ENCODE measurements at regions of chr3 and their contacts with region 1.

Region 1: DNA sequence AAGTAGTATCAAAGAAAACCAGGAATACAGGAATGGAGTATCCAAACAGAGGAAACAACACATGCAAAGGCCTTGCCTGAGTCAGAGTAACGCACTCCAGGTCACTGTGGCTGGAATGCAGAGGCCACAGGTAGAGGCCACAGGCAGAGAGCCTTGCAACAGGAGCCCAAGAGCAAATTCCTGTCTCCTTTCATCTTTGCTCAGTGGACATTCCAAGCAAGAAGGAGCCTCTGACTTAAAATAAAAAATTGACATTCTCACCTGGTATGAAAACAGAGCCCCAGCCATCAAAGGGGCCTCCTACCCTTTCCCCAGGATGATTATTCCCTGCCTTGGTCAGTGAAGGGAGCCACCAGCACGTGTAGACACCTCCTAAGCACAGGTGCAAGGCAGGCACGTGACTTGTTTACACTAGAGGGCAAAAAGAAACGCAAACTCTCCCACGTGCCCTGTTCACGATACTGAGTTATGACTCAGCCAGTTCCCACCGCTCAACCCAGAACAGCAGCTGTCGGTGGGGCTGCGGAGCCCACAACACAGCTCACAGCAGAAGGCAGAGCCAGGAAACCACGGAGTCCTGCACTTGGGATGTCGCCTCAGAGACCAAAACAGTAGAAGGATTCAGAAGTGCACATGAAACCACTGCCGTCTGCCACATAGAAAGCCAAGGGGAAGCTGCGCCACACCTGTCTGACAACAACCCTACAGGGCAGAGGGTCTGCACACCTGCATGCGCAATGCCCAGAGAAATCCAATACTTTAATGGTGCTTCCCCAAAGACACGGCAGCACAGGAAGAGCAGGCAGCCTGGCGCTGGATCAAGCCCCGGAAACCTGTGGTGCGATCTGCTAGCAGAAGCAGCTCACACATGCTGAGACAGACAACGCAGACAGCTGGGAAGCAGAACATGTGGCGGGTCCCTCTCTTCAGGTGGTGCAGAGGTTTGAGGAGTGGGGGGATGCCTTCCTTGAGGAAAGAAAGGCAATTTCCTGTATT is 52.1 kb downstream of the ITGB5 start:
- DNase-seq: peak; percentile 76
- H3K4me3 Mint-ChIP-seq: peak overlapping the region; percentile 68
- H3K27ac Mint-ChIP-seq: peak overlapping the region; percentile 3
- H3K4me1 Mint-ChIP-seq: peaks cover 25% of the 10 kb centered on the region
- H3K27me3 Mint-ChIP-seq: peaks cover 7% of the 10 kb centered on the region

Region 2: DNA sequence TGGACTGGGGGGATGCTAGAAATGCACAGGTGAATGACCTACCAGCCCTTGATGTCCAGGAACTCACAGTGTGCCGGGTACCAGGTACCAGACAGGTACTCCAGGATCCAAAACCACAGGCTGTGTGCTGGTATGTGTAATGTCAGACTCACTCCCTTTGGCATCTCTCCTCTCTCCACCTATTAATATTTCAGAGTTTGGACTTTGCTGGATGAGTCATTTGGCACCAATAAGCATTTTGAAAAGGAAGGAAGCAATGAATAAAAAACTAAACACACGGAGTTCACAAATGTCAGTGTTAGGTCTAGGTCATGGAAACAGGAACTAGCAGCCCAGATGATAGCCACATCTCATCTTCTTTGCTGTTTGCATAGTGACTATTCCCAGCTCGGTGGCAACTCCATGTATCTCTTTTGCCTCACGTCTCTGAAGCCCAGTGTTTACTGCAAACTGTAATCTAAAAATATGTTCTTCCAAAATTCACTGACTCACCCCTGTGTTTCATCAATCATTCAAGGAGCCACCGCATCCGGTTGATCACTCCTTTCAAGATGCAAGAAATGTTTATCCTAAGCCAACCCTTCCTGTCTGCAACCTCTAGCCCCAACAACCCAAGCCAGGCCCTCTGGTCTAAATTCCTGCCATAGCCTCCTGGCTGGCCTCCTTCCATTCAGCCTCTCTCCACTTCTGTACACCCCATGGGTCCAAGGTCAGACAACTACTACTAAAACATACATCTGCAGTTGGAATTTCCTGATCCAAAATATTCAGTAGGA is 43.7 kb after region 1 on chr3:
- CTCF ChIA-PET with region 1: no interaction called
- POLR2A ChIA-PET with region 1: no interaction called
- intact Hi-C with region 1: loop called (anchors 5 kb)
- DNase-seq: peak; percentile 47
- H3K4me3 Mint-ChIP-seq: no peak overlapping the region
- H3K27ac Mint-ChIP-seq: peak overlapping the region; percentile 1
- H3K4me1 Mint-ChIP-seq: peaks cover 12% of the 10 kb centered on the region
- H3K27me3 Mint-ChIP-seq: peaks cover 11% of the 10 kb centered on the region